ENCODE measurements at regions of chr15 and their contacts with region 1.

Region 1: GRCh38 chr15:82952158-82953081 is at the start of gene HOMER2:
- DNase-seq: peak in 5 of 10 donors; percentile 13 to 87 (median 31)

Region 2: DNA sequence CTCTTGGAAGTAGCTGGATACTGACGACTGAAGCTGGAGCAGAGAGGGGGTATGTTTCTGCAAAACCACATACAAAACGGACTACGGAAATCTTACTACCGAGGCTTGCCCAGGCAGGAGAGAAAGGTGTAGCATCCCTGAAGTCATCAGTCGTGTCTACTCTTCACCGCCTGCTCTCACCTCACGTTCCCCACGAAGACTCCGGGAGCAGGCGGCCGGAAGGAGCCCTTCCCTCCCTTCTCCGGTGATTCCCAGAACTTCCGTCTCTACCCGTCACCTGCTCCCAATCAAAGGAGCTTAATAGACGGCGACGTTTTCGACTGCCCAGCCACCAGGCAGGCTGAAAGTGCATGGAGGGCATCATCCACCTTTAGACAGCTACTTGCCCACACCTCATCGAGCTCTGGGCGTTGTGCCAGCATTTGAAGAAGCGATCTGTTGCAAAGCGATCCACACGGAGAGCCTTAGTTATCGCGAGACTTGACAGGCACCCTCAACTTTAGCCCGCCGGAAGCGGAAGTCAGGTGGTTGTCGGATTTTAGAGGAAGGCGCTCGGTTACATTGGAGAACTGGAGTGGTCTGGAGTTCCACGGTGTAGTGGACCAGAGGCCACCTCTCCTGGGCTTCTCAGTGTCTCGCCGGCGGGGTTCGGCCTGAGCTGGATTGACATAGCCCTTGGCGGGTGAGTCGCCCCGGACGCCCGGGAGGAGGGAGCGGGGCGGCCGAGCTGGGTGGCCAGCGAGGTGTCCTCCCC is 33.4 kb after region 1 on chr15 and contains the start of gene RAMAC:
- intact Hi-C with region 1: loop called (anchors 5 kb)
- DNase-seq: peak; percentile 88 to 99 (median 96)

Region 3: DNA sequence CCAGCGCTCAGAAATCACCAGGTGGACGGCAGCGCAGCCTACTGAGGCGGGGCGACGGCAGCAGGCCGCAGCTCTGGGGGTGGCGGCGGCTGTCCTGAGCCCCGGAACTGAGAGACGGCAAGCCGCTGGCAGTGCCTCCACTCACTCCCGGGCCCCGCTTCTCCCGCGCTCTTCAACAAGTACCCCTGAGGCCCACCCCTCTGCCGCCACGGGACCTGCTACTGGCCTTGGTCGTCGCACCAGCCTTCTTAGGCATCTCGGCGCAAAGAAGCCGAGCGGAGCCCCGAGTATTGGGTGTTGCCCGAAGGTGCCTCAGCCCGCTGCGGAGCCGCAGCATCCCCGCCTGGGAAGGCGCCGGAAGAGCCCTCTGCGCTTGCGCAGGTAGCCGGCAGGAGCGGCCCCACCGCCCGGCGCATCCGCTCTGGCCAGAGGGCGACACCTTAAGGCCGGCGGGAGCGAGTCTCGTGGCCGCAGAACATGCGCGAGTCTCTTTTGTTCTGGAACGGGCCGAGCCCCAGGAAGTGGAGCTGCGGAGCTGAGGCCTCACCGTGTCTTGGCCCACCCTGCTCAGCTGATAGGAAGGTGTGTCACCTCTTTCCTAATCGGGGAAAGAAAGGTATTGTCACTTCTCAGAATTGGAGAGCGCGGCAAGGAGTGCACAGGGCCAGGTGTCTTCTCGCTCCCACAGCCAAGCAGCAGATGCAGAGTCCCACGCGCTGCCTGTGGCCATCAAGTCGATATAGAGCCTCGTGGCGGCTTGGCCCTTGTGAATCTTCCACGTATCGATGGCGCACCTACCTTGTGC is 59.1 kb after region 1 on chr15 and contains the start of gene C15orf40:
- intact Hi-C with region 1: no loop called
- DNase-seq: peak; percentile 83 to 98 (median 90)